Lower leg skin (tissue), 4 donors: ENCODE measurements at regions of chr1 and their contacts with region 1.

Region 1: GRCh38 chr1:234114648-234115307 is 210.3 kb downstream of the SLC35F3 start:
- DNase-seq: peak in 1 of 2 donors; percentile 28
- H3K4me3 ChIP-seq: no peak overlapping the region
- CTCF ChIP-seq: no peak
- POLR2A ChIP-seq: no peak

Region 2: GRCh38 chr1:234309598-234310459 is 195.1 kb after region 1 on chr1:
- intact Hi-C with region 1: loop called (anchors 5 kb)
- DNase-seq: peak; percentile 40 to 89
- H3K4me3 ChIP-seq: no peak overlapping the region
- CTCF ChIP-seq: peak in 1 of 3 donors; percentile 47
- POLR2A ChIP-seq: no peak